WTC11 (cell line): ENCODE measurements at regions of chr12 and their contacts with region 1.

Region 1: GRCh38 chr12:4857472-4858291 is 52.0 kb upstream of the KCNA1 start:
- DNase-seq: peak; percentile 78
- ATAC-seq: peak; percentile 25
- H3K4me3 Mint-ChIP-seq: peak overlapping the region; percentile 28
- H3K27ac Mint-ChIP-seq: no peak overlapping the region
- H3K4me1 Mint-ChIP-seq: peaks cover 16% of the 10 kb centered on the region
- H3K27me3 Mint-ChIP-seq: peaks cover 34% of the 10 kb centered on the region
- CTCF ChIP-seq: peak; percentile 60

Region 2: DNA sequence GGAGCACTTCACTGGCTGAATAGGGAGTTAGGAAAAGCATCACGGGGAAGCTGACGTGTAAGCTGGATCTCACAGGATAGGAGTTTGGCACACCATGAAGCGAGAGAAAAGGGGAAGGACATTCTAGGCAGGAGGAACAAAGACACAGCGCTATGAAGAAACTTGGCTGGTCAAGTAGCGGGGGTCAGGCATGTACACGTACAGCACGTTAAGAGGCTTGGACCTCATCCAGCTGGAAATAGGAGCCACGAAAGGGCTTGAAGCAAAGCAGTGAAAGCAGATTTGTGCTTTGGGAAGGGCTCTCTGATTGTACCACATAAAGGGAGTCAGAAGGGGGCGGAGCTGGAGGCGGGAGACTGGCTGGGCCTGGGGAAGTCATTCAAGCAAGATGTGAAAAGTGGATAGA is 157.1 kb before region 1 on chr12:
- CTCF ChIA-PET with region 1: no interaction called
- POLR2A ChIA-PET with region 1: no interaction called
- DNase-seq: peak; percentile 33
- ATAC-seq: peak; percentile 53; the same call in 1 of the 2 replicates
- H3K4me3 Mint-ChIP-seq: no peak overlapping the region
- H3K27ac Mint-ChIP-seq: peak overlapping the region; percentile 22
- H3K4me1 Mint-ChIP-seq: peaks cover 8% of the 10 kb centered on the region
- H3K27me3 Mint-ChIP-seq: no peaks in the 10 kb centered on the region
- CTCF ChIP-seq: no peak

Region 3: DNA sequence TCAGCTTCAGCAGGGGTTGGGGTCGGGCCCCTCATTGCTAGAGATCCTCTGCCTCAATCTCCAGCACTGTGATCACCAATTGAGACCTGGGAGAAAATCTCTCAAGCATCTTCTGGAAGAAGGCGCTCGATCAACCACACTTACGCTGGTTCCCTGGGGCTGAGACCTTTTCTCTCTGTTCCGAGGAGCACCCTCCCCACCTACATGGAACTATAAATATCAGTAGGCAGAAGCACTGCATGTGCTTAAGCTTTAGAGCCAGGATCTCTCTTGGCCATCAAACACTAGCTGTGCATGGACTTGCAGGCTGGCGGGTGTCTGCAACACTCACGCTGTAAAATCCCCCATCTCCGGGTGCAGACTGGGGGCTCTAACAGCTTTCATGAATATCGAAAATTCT is 13.8 kb after region 1 on chr12:
- CTCF ChIA-PET with region 1: interaction called, 46 read pairs
- POLR2A ChIA-PET with region 1: no interaction called
- DNase-seq: no peak
- ATAC-seq: no peak
- H3K4me3 Mint-ChIP-seq: no peak overlapping the region
- H3K27ac Mint-ChIP-seq: no peak overlapping the region
- H3K4me1 Mint-ChIP-seq: no peaks in the 10 kb centered on the region
- H3K27me3 Mint-ChIP-seq: peaks cover 30% of the 10 kb centered on the region
- CTCF ChIP-seq: no peak

Region 4: DNA sequence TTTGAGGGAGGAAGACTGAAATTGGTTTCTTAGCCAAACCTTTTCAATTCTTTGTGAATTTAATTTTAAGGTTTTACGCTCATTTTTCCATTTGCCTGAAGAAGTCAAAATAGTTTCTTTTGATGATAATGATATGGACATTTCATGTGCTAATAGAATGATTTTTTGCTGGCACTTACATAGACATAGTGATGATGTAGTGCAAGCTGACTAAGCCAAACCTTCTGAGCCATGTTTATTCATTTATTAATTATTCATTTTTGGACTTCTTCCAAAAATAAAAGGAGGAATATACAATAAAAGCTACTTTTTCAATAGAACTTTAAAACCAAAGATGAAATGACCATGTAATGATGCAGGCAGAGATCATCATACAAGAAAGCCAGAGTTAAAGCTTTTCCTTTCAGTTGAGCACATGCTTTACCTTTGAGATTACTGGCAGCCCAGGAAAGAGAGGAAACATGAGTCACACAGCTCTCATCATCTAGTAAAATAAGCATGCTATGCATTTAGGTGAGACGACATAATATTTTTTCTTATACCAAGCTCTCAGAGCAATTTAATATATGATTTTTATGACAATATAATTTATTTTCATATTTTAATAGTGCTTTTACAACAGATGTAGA is 76.8 kb after region 1 on chr12:
- CTCF ChIA-PET with region 1: interaction called, 27 read pairs
- POLR2A ChIA-PET with region 1: no interaction called
- DNase-seq: no peak
- ATAC-seq: no peak
- H3K4me3 Mint-ChIP-seq: no peak overlapping the region
- H3K27ac Mint-ChIP-seq: no peak overlapping the region
- H3K4me1 Mint-ChIP-seq: peaks cover 11% of the 10 kb centered on the region
- H3K27me3 Mint-ChIP-seq: peaks cover 8% of the 10 kb centered on the region
- CTCF ChIP-seq: no peak

Region 5: GRCh38 chr12:4991373-4991772 is 133.7 kb after region 1 on chr12:
- CTCF ChIA-PET with region 1: interaction called, 39 read pairs
- POLR2A ChIA-PET with region 1: no interaction called
- DNase-seq: no peak
- ATAC-seq: no peak
- H3K4me3 Mint-ChIP-seq: no peak overlapping the region
- H3K27ac Mint-ChIP-seq: no peak overlapping the region
- H3K4me1 Mint-ChIP-seq: peaks cover 23% of the 10 kb centered on the region
- H3K27me3 Mint-ChIP-seq: no peaks in the 10 kb centered on the region; the same call in 1 of the 2 replicates
- CTCF ChIP-seq: no peak

Region 6: DNA sequence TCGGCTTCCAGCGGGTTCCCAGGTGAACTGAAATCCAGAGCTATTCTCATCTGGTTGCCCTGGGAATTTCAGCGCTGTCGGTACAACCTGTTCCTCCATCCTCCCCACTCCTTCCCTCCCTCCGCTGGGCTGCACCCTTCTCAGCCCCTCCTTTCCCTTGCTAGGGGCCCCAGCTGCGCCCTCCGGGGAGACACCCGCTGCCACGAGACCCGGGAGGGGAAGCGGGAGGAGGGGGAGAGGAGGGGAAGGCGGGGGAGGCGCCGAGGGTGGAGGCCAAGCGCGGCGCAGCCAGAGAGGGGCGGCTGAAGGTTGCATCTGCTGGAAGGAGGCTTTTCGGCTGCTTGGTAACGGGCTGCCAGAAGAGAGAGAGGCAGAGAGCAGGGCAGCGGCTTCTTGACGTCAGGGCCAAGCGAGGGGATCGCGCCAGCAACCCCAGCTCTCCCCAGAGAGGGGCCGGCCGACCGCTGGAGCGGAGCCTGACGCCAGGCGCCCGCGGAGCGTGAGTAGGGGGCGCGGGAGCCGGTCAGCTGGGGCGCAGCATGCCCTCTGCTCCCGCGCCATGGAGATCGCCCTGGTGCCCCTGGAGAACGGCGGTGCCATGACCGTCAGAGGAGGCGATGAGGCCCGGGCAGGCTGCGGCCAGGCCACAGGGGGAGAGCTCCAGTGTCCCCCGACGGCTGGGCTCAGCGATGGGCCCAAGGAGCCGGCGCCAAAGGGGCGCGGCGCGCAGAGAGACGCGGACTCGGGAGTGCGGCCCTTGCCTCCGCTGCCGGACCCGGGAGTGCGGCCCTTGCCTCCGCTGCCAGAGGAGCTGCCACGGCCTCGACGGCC is 186.1 kb after region 1 on chr12 and contains the start of gene KCNA5:
- CTCF ChIA-PET with region 1: interaction called, 11 read pairs
- POLR2A ChIA-PET with region 1: no interaction called
- DNase-seq: peak; percentile 61
- ATAC-seq: peak; percentile 72
- H3K4me3 Mint-ChIP-seq: peak within 1 kb of the TSS; percentile 63
- H3K27ac Mint-ChIP-seq: no peak within 1 kb of the TSS
- H3K4me1 Mint-ChIP-seq: peaks cover 10% of the 10 kb centered on the region
- H3K27me3 Mint-ChIP-seq: peaks cover 69% of the 10 kb centered on the region
- CTCF ChIP-seq: no peak
- total RNA-seq, gene KCNA5: 0.14 to 0.23 TPM (median 0.22 TPM) in 3 replicates

Region 7: DNA sequence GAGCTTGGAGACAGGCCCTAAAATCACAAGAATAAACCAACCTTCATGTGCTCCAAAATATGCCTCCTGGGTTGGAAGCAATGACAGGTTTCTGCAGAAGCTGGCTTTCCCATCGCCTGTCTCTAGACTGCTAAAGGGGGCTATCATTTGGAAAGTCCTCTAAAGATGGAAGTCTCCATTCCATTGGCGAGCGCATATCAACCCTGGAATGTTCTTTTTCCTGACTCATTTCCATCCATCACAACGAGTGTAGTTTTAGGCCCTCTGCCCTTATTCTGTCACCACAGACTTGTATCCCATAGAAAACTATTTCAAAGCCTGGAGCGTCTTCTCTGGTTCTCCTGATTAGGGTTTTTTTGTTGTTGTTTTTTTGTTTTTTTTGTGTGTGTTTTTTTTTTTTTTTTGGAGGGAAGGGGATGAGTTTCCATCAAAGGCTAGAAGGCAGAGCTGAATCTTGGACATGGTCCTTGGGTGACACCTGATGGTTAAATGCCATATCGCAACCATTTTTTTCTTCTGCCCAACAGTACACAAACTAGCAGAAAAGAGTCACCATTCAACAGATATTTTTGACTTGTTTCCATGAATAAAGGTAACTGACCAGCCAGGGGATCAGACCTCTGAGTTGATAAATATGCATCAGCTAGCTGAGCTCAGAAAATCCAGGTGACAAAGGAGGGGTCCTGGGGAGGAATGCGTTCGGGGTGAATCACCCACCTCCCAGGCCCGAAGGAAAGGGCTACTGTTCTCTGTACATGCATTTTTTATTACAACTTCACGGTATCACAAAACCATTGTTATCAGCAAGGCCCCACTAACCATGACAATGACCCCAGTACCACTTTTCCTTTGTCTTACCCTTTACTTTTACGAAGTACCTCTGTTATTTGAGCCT is 226.5 kb after region 1 on chr12:
- CTCF ChIA-PET with region 1: interaction called, 22 read pairs
- POLR2A ChIA-PET with region 1: no interaction called
- DNase-seq: no peak
- ATAC-seq: peak; percentile 55
- H3K4me3 Mint-ChIP-seq: no peak overlapping the region
- H3K27ac Mint-ChIP-seq: no peak overlapping the region
- H3K4me1 Mint-ChIP-seq: peaks cover 13% of the 10 kb centered on the region
- H3K27me3 Mint-ChIP-seq: no peaks in the 10 kb centered on the region; the same call in 1 of the 2 replicates
- CTCF ChIP-seq: peak; percentile 42